PC-9 (cell line): ENCODE measurements at regions of chr19 and their contacts with region 1.

Region 1: DNA sequence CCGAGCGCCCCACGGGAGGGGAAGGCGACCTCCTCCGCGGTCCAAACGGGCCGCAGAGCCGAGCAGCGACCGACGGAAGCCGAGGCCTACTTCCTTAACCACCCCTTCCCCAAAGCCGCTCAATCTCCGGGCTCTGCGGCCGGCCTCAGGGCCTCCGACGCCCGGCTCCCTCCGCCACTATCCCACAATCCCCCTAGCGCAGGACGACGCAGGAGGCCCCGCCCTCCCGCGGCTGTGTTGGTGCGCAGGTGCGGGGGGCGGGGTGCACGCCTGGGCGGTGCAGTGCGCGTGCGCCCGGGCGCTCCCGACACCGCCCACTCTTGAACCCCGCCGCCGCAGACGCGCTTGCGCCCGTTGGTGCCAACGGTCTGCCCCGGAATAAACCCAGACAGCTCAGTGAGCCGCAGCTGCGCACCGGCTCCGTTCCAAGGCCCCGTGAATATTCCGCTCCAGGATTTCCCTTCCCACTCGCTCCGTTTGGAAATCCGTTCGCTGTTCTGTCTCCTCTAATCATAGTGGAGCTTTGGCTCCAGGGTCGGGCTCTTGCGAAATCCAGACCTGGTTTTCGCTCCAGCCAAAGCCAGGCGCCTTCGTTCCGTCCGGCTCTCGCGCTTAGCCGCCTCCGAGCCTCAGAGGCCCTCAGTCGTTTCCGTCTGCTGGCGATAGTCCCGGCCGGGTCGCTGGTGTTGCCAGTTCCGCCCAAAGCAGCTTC is at the start of gene PPP6R1:
- DNase-seq: peak; percentile 99 to 100
- H3K4me3 ChIP-seq: peak within 1 kb of the TSS; percentile 77
- H3K27ac ChIP-seq: peak within 1 kb of the TSS; percentile 86
- H3K4me1 ChIP-seq: peaks cover 42% of the 10 kb centered on the region
- H3K27me3 ChIP-seq: no peaks in the 10 kb centered on the region
- CTCF ChIP-seq: no peak
- total RNA-seq, gene PPP6R1: 136 and 159 TPM in 2 replicates

Region 2: DNA sequence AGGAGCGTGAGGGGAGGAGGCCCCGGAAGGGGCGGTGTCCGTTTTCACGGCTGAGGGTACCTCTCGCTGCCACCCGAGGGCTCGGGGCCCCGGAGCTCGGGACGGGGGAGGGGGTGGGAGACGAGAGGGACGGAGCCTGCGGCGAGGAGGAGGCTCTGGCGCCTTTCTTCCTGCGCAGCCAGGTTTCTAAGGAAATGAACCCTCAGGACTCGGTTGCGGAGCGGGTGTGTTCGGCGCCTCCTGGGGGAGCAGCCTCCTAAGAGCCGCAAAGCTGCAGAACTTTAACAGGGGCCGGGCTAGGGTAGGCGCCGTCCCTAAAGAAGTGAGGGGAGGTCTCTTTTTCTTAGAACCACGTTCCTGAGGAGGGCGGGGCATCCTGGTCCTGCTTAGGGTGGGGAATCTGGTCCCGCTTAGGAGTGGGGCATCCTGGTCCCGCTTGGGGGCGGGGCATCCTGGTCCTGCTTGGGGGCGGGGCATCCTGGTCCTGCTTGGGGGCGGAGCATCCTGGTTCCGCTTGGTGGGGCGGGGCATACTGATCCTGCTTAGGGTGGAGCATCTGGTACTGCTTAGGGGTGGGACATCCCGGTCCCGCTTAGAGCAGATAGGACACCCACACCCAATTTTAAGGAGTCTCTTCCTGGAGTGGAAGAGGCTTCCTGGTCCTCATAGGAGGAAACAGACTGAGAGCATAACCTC is 85.1 kb before region 1 on chr19:
- CTCF ChIA-PET with region 1: interaction called, 12 read pairs
- POLR2A ChIA-PET with region 1: no interaction called
- intact Hi-C with region 1: no loop called
- DNase-seq: peak; percentile 60 to 96
- H3K4me3 ChIP-seq: peak overlapping the region; percentile 88
- H3K27ac ChIP-seq: peak overlapping the region; percentile 23; the same call in 1 of the 2 replicates
- H3K4me1 ChIP-seq: peaks cover 10% of the 10 kb centered on the region; the same call in 1 of the 2 replicates
- H3K27me3 ChIP-seq: no peaks in the 10 kb centered on the region
- CTCF ChIP-seq: no peak; the same call in 1 of the 2 replicates

Region 3: GRCh38 chr19:55216461-55217198 is 42.4 kb before region 1 on chr19:
- CTCF ChIA-PET with region 1: interaction called, 3 read pairs
- POLR2A ChIA-PET with region 1: interaction called, 11 read pairs
- intact Hi-C with region 1: loop called (anchors 1 kb)
- DNase-seq: peak; percentile 95 to 100
- H3K4me3 ChIP-seq: peak overlapping the region; percentile 61
- H3K27ac ChIP-seq: peak overlapping the region; percentile 92
- H3K4me1 ChIP-seq: peaks cover 15% of the 10 kb centered on the region
- H3K27me3 ChIP-seq: no peaks in the 10 kb centered on the region
- CTCF ChIP-seq: no peak

Region 4: DNA sequence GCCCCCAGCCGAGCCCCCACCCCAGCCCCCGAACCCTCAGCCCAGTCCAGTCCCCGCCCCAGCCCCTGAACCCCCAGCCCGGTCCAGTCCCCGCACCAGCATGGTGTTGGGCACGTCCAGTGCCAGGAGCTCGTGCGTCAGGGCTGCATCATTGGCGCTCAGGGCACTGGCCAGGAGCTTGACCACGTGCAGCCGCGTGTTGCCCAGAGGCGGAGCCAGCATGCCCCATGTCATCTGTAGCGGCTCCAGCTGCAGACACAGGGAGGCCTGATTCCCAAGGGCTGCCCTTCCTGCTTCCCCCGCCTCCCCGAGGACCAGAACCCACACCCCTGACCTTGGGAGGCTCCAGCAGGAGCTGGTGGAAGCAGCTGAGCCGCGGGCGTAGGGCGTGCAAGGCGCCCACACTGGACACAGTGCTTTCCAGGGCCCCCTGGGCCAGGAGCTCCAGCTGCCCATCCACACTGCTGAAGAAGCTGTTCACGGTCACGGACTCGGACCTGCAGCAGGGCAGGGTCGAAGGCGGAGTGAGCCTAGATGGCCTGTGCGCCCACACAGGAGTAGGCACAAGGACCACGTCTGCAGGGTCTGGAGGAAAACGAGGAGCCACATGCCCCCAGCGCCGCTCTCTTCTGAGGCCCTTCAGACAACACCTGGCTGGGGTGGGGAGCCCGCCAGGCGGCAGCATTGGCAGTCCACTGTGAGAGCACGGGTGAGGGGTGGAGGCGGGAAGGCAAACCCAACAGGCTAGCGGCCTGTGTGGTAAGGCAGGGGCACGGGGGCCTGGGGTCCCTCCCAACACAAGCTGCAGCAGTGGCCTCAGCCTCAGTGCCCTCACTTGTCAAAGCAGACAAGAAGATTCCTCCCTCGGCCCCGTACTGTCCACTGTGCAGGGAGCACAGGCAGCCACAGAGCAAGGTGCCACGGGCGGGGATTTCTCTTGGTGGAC is 17.6 kb before region 1 on chr19:
- CTCF ChIA-PET with region 1: no interaction called
- POLR2A ChIA-PET with region 1: no interaction called
- intact Hi-C with region 1: no loop called
- DNase-seq: no peak
- H3K4me3 ChIP-seq: no peak overlapping the region
- H3K27ac ChIP-seq: no peak overlapping the region
- H3K4me1 ChIP-seq: no peaks in the 10 kb centered on the region
- H3K27me3 ChIP-seq: no peaks in the 10 kb centered on the region
- CTCF ChIP-seq: no peak

Region 5: DNA sequence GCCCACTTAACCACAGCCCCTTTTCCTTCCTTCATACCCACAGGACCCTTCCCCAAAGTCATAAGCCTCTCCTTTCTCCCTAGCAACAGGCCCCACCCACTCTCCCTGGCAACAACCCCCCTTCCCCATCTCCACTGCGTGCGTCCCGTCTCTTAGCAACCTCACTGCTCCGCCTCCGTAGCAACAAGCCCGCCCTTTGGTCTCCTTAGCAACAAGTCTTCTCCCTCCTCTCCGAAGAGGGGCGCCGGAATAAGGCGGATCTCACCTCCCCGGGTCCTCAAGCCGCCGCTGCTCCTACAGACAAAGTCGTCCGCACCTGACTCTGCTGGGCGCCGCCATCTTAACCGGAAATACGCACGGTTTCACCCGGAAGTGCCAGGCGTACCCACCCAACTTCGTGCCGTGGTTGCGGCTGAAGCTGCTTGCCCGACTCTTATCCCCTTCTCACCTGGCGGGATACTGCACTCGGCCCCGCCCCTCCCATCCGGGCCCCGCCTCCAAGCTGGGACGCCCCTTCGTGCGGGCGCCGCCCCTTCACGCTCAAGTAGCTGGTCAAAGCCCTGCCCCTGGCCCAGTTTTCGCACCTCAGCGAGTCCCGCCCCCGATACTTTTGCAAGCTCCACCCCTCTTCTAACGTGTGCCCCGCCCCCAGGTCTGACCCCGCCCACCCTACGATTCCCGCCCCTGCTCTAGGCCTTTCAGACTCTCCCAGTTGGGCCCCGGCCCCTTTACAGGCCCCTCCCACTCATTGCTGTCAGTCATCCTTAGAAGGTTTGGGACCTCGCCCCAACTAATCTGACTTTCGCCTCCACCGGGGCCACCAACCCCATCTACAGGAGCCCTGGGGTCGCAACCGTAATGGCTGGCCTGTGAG is 21.0 kb after region 1 on chr19 and contains the start of gene HSPBP1:
- CTCF ChIA-PET with region 1: no interaction called
- POLR2A ChIA-PET with region 1: interaction called, 18 read pairs
- intact Hi-C with region 1: loop called (anchors 1 kb)
- DNase-seq: peak; percentile 94 to 100
- H3K4me3 ChIP-seq: peak within 1 kb of the TSS; percentile 94
- H3K27ac ChIP-seq: peak within 1 kb of the TSS; percentile 72
- H3K4me1 ChIP-seq: peaks cover 8% of the 10 kb centered on the region; the same call in 1 of the 2 replicates
- H3K27me3 ChIP-seq: peaks cover 4% of the 10 kb centered on the region; the same call in 1 of the 2 replicates
- CTCF ChIP-seq: no peak
- total RNA-seq, gene HSPBP1: 66.2 and 79.6 TPM in 2 replicates

Region 6: DNA sequence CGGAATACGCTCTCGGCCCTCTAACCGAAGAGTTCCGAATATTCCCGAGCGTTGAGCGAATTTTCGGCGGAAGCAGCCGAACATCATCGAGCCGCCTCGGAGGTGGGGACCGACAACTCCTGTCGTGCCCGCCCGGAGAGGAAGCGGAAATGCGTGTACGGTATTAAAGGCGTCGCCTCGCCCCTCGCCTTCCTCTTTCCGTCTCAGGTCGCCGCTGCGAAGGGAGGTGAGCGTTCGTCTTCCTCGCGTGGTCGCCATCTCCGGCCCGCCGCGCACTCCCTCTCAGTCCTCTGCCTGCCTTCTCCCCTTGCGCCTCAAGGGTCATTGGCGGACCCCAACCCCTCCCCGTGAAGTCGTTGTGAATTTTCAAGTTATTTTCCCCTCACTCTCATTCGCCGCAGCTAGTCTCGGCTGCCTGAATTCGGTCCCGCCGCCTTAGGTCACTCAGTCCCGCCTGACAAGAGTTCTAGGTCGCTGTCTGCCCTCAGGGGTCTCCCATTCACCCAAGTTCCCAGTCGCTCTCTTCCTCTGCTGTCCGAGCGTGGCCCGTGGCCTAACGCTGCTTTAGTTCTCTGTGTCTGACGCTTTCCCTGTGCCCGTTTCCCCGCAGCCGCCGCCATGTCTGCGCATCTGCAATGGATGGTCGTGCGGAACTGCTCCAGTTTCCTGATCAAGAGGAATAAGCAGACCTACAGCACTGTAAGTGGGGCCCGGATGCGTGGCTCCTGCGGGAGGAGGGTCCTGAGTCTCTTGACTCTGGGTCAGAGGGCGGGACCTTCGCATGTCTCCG is 127.0 kb after region 1 on chr19 and contains the start of gene RPL28:
- CTCF ChIA-PET with region 1: interaction called, 5 read pairs
- POLR2A ChIA-PET with region 1: interaction called, 8 read pairs
- intact Hi-C with region 1: loop called (anchors 1 kb)
- DNase-seq: peak; percentile 98 to 100
- H3K4me3 ChIP-seq: peak within 1 kb of the TSS; percentile 88
- H3K27ac ChIP-seq: peak within 1 kb of the TSS; percentile 83
- H3K4me1 ChIP-seq: peaks cover 39% of the 10 kb centered on the region
- H3K27me3 ChIP-seq: no peaks in the 10 kb centered on the region
- CTCF ChIP-seq: no peak
- total RNA-seq, gene RPL28: 2,433 and 2,547 TPM in 2 replicates